Activated CD4-positive, alpha-beta T cell treated with anti-CD3 and anti-CD28 coated beads for 36 hours (primary cell): ENCODE measurements at regions of chr2 and their contacts with region 1.

Region 1: DNA sequence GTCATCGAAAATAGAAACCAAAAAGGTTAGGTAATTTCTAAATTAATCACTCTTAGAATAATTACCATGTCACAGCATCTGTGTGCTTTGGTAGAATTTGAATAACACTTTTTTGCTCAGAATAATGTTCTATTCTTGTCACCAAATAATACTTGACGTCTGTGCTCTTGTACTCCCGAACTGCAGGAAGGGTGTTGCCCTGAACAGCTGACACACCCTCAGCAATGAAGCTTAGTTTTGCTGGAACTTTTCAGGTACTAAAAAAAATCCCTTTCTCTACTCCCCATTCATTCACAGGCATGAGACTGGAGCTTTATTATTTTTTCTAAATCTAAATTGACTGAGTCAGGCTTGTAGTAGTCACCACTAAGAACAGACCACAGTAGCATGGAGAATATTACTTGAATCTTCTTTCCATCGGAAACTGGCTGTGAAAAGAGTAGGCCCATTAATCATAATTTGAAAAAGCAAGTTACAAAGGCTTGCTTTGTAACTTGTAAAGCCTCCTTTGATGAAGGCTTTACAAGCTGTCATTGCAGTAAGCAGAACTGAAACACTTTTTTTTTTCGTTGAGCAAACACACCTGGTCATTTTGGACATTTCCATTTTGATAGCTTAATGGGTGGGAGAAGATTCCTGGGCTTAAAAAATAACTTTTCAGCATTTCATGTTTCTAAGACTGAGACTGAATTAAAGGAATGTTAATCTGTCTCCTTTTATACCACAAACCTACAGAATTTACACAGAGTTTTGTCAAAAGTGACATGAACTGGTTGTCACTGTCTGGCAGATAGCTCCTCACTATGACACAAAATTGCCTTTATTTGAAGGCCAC is 70.3 kb upstream of the PELI1 start:
- DNase-seq: peak; percentile 57
- ATAC-seq: peak; percentile 67
- H3K4me3 Mint-ChIP-seq: peak overlapping the region; percentile 64
- H3K27ac Mint-ChIP-seq: peak overlapping the region; percentile 97
- H3K4me1 Mint-ChIP-seq: peaks cover 64% of the 10 kb centered on the region
- H3K27me3 Mint-ChIP-seq: no peaks in the 10 kb centered on the region

Region 2: GRCh38 chr2:64036034-64036705 is 178.3 kb before region 1 on chr2:
- CTCF ChIA-PET with region 1: interaction called, 5 read pairs
- POLR2A ChIA-PET with region 1: interaction called, 4 read pairs
- intact Hi-C with region 1: loop called (anchors 1 kb)
- DNase-seq: peak; percentile 24
- ATAC-seq: peak; percentile 88
- H3K4me3 Mint-ChIP-seq: peak overlapping the region; percentile 40
- H3K27ac Mint-ChIP-seq: peak overlapping the region; percentile 64
- H3K4me1 Mint-ChIP-seq: peaks cover 55% of the 10 kb centered on the region
- H3K27me3 Mint-ChIP-seq: peaks cover 2% of the 10 kb centered on the region

Region 3: DNA sequence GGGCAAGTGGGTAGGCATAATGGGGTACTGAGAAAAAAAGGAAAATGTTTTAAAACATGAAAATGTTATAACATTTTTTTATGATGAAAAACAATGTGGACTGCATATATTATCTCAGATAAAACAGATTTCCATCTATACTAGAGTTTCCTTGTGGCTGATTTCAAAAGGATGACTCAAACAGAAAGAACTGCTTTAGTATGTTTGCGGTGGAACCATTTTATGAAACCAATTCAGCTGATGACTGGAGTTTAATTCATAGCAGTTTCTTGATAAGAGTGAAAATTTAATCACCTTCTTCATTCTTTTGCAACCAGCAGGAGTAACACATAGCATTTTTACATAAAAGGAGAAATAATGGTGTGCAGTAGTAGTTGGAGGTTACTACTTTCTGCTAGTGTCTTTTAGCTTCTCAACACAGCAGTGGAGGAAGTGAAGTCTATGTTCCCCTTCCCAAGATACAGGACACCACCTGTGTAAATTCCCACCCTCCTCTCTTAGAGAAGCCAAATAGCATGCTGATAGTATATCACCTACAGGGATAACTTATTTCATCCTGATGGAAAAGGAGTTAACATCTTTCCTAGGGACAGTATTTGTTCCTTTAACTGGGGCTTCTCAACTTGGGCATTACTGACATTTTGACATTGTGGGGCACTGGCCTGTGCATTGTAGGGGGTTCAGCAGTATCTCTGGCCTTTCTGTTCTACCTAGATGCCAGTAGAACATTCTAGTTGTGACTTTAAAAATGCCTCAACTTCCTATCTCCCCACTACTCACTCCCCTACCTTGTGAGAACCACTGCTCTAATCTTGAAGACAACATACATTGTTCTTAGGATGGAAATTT is 100.2 kb before region 1 on chr2:
- CTCF ChIA-PET with region 1: interaction called, 3 read pairs
- POLR2A ChIA-PET with region 1: no interaction called
- intact Hi-C with region 1: loop called (anchors 1 kb)
- DNase-seq: no peak
- ATAC-seq: peak; percentile 85
- H3K4me3 Mint-ChIP-seq: peak overlapping the region; percentile 24
- H3K27ac Mint-ChIP-seq: peak overlapping the region; percentile 64
- H3K4me1 Mint-ChIP-seq: peaks cover 74% of the 10 kb centered on the region
- H3K27me3 Mint-ChIP-seq: no peaks in the 10 kb centered on the region

Region 4: GRCh38 chr2:64165706-64166105 is 48.8 kb before region 1 on chr2:
- CTCF ChIA-PET with region 1: no interaction called
- POLR2A ChIA-PET with region 1: interaction called, 3 read pairs
- intact Hi-C with region 1: loop called (anchors 1 to 2 kb)
- DNase-seq: no peak
- ATAC-seq: peak; percentile 41
- H3K4me3 Mint-ChIP-seq: no peak overlapping the region
- H3K27ac Mint-ChIP-seq: no peak overlapping the region
- H3K4me1 Mint-ChIP-seq: no peaks in the 10 kb centered on the region
- H3K27me3 Mint-ChIP-seq: no peaks in the 10 kb centered on the region

Region 5: DNA sequence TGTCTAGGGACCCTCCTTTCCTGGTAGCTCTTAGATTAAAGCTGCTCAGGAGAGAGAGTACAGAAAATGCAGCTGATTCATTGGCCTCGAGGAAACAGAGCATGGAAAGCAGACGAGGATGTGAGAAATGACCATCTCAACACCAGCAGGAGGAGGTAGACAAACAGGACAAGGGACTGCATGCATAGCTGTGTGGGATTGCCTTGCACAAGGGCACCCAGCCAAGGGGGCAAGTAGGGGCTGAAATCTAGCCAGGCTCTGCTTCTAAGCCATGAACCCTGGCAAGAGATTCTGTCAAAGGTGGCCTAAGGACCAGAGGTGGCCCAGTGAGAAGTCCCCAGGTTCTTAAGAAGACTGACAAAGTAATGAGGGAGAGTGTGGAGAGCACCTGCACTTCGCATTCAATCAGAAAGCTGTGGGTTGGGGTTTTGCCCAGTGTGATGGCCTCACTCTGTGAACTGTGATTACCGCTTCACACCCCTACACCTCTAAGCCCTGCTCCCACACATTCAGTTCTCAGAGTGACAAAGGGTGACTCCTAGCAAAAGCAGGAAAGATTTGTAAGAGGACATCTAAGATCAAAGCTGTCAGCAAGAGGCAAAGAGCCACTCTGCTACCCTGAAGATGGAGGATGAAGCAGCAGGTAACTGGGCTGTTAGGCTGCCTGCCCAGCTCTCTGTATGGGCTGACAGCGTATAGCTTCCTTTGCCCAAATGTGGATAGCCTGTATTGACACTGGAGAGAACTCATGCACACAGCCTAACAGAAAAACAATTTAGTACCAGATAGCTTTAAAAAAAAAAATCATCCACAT is 81.0 kb after region 1 on chr2:
- CTCF ChIA-PET with region 1: interaction called, 4 read pairs
- POLR2A ChIA-PET with region 1: interaction called, 4 read pairs
- intact Hi-C with region 1: loop called in 1 of 2 experiments (anchors 1 kb)
- DNase-seq: peak; percentile 80
- ATAC-seq: peak; percentile 98
- H3K4me3 Mint-ChIP-seq: no peak overlapping the region
- H3K27ac Mint-ChIP-seq: no peak overlapping the region
- H3K4me1 Mint-ChIP-seq: peaks cover 20% of the 10 kb centered on the region
- H3K27me3 Mint-ChIP-seq: peaks cover 4% of the 10 kb centered on the region

Region 6: GRCh38 chr2:64675860-64676259 is 461.4 kb after region 1 on chr2:
- CTCF ChIA-PET with region 1: no interaction called
- POLR2A ChIA-PET with region 1: no interaction called
- intact Hi-C with region 1: loop called in 1 of 2 experiments (anchors 1 kb)
- DNase-seq: peak; percentile 90
- ATAC-seq: peak; percentile 100
- H3K4me3 Mint-ChIP-seq: no peak overlapping the region
- H3K27ac Mint-ChIP-seq: peak overlapping the region; percentile 62
- H3K4me1 Mint-ChIP-seq: peaks cover 44% of the 10 kb centered on the region
- H3K27me3 Mint-ChIP-seq: no peaks in the 10 kb centered on the region